Breast epithelium (tissue), 4 donors: ENCODE measurements at regions of chr4 and their contacts with region 1.

Region 1: DNA sequence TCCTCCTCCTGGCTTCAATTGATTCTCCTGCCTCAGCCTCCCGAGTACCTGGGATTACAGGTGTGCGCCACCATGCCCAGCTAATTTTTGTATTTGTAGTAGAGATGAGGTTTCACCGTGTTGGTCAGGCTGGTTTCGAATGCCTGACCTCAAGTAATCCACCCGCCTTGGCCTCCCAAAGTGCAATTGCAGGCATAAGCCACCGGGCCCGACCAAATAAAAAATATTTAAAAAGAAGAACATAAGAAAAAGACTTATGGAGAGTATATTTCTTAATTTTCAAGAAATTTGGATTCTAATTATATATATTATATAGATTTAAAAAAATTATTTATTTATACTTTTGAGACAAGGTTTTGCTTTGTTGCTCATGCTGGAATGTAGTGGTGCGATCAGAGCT is 29.8 kb downstream of the N4BP2 start:
- DNase-seq: no peak
- H3K4me3 ChIP-seq: no peak overlapping the region
- H3K27ac ChIP-seq: no peak overlapping the region
- H3K4me1 ChIP-seq: no peaks in the 10 kb centered on the region
- H3K27me3 ChIP-seq: no peaks in the 10 kb centered on the region
- CTCF ChIP-seq: no peak
- POLR2A ChIP-seq: no peak

Region 2: GRCh38 chr4:39846120-39846519 is 240.3 kb before region 1 on chr4:
- intact Hi-C with region 1: no loop called
- DNase-seq: no peak
- H3K4me3 ChIP-seq: no peak overlapping the region
- H3K27ac ChIP-seq: no peak overlapping the region
- H3K4me1 ChIP-seq: no peaks in the 10 kb centered on the region
- H3K27me3 ChIP-seq: no peaks in the 10 kb centered on the region
- CTCF ChIP-seq: no peak
- POLR2A ChIP-seq: no peak

Region 3: GRCh38 chr4:40112027-40112792 is 25.8 kb after region 1 on chr4:
- intact Hi-C with region 1: loop called (anchors 2 kb)
- DNase-seq: no peak
- H3K4me3 ChIP-seq: no peak overlapping the region
- H3K27ac ChIP-seq: no peak overlapping the region
- H3K4me1 ChIP-seq: no peaks in the 10 kb centered on the region
- H3K27me3 ChIP-seq: no peaks in the 10 kb centered on the region
- CTCF ChIP-seq: no peak
- POLR2A ChIP-seq: no peak

Region 4: DNA sequence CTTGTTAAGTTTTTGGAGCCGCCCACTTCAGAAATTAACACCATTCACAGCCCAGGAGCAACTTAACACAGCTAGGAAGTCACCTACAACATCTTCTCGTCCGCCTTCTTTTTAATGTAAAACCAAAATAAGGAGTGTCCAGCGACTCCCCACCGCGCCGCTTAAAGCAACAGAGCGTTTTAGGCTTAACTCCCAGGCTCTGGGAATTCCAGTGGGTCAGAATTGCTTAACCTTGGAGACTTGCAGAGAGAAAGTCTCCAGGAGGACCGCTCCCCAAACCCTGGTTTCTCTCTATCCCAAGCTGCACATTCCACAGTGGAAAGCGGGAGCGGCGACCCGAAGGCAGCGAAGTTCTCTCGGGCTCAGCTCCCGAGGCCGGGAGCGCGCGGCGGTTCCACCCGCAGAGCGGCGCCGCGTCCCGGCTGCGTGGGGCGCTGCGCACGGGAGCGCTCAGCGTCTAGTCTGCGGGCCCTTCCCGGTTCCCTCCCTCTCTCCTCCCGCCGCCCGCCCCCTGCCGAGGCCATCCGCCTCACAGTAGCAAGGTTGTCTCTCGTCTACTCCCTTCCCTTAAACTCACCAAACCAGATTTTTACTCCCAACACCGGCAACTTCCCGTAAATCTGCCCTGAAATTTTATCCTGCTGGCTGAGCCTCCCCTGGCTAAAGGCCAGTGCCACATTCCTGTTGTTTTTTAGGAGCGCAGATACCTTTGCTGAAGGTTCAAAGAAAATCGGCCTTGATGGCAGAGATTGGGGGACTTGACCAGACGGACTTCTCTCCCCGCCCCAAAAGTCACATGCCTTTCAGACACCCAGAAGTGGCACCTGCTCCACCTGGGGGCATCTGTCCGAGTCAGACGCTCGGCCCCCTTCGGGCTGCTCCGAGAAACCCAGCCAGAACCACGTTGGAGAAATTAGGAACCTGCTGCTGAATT is 543.2 kb after region 1 on chr4 and contains the start of gene RBM47:
- intact Hi-C with region 1: no loop called
- DNase-seq: peak; percentile 73 to 88
- H3K4me3 ChIP-seq: peak within 1 kb of the TSS; percentile 56 to 82 (median 66)
- H3K27ac ChIP-seq: peak within 1 kb of the TSS; percentile 93 to 94
- H3K4me1 ChIP-seq: no peaks in the 10 kb centered on the region
- H3K27me3 ChIP-seq: no peaks in the 10 kb centered on the region
- CTCF ChIP-seq: peak in 2 of 3 donors; percentile 17 to 24
- POLR2A ChIP-seq: peak; percentile 48
- total RNA-seq, gene RBM47: 66.6 to 151 (median 89.5) TPM